Activated T-helper 1 cell treated with anti-CD3 and anti-CD28 coated beads, Interleukin-12 subunit alpha, Interleukin-12 subunit beta, Interleukin-2, Interleukin-4 antibody, amounts not matched to agents 30 ng/mL and 10 ng/mL and 1 ng/mL, durations not matched to agents 14 hours and 24 hours and 36 hours (primary cell): ENCODE measurements at regions of chr11 and their contacts with region 1.

Region 1: DNA sequence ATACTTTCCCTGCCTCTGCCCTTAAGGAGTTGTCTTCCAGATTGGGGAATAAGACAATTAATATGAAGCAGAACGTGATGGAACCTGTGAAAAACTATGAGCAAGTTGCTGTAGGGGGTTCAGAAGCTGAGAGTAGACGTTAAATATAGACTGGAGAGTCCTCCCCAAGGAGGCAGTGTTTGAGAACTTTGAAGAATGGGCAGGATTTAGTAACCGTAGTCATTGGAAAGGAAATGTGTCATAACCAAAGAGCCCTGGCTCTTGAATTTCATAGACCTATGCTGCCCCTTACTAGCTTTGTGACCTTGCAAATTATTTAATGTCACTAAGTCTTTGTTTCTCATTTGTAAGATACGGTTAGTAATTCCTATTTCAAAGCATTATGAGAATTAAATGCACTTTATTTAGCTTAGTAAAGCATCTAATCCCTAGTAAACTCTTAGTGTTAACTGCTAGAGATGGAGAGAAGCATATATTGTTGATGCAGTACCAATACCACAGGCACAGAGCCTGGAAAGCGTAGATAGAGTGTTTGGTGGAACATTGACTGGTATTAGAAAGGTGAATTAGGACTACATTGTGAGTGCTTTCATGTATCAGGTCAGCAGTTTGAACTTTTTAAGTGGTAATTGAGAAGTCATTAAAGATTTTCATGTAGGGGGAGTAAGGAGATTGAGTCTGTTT is 54.1 kb downstream of the MCAM start:
- DNase-seq: no peak
- H3K4me3 Mint-ChIP-seq: no peak overlapping the region
- H3K27ac Mint-ChIP-seq: no peak overlapping the region
- H3K4me1 Mint-ChIP-seq: peaks cover 46% of the 10 kb centered on the region
- H3K27me3 Mint-ChIP-seq: no peaks in the 10 kb centered on the region

Region 2: DNA sequence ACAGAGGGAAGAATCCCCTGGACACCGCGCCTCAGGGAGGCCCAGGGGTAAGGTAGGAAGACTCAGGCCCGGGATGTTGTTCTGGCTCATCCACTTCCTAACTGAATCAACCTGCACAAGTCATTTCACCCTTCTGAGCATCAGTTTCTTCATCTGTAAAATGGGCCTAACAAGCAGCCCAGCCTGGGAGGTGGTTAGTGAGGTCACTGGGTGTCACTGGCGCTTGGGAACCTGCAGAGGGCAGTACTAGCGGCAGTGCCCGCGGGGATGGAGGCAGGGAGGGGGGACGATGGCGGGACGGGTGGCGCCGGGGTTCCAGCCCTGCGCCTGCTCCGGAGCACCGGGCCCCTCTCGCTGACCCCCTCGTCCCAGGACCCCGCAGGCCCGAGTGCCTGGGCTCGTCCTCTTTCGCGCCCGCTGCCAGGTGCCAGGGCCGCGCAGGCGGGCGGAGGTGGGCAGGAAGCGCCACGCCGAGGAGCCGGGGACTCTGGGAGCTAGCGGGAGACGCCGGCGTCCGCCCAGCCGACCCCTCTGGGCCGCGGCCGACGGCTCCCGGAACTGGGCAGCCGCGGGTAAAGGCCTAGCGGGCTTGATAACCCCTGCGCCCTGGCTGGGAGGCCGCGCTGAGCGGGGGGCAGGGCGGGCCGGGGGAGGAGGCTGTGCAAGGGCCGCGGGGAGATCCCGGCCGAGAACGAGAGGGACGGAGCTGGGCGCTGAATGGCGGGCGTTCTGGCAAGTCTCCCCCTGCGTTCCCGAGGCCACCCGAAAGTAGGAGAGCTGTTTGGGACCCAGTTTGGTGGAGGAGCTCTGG is 94.1 kb before region 1 on chr11 and contains the start of gene NLRX1:
- intact Hi-C with region 1: loop called (anchors 2 kb)
- DNase-seq: peak; percentile 77
- H3K4me3 Mint-ChIP-seq: peak within 1 kb of the TSS; percentile 92
- H3K27ac Mint-ChIP-seq: peak within 1 kb of the TSS; percentile 94
- H3K4me1 Mint-ChIP-seq: peaks cover 24% of the 10 kb centered on the region
- H3K27me3 Mint-ChIP-seq: peaks cover 2% of the 10 kb centered on the region
- total RNA-seq, gene NLRX1: 24.1 and 29.5 TPM in 2 replicates

Region 3: DNA sequence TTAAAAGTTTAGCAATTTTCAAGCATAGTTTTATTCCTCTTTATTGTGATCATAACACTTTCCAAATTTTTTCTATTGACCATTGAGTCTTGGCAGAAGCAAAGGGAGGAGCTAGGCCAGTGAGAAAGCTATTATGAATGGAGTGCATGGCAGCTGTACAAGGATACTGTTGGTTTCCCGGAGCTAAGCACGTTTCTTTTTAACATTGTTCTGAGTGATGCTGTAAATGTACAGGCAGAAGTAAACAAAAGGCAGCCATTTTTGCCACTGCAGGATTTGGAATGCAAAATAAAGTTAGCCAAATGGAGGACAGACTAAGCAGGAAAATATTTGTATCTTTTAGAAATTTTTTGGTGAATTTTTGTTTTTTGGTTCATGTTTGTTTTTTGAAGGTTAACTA is 40.5 kb before region 1 on chr11:
- intact Hi-C with region 1: loop called (anchors 1 kb)
- DNase-seq: no peak
- H3K4me3 Mint-ChIP-seq: no peak overlapping the region
- H3K27ac Mint-ChIP-seq: no peak overlapping the region
- H3K4me1 Mint-ChIP-seq: peaks cover 36% of the 10 kb centered on the region
- H3K27me3 Mint-ChIP-seq: no peaks in the 10 kb centered on the region

Region 4: GRCh38 chr11:119236490-119236889 is 26.3 kb before region 1 on chr11:
- intact Hi-C with region 1: loop called (anchors 1 kb)
- DNase-seq: no peak
- H3K4me3 Mint-ChIP-seq: no peak overlapping the region
- H3K27ac Mint-ChIP-seq: peak overlapping the region; percentile 84
- H3K4me1 Mint-ChIP-seq: peaks cover 46% of the 10 kb centered on the region
- H3K27me3 Mint-ChIP-seq: no peaks in the 10 kb centered on the region

Region 5: DNA sequence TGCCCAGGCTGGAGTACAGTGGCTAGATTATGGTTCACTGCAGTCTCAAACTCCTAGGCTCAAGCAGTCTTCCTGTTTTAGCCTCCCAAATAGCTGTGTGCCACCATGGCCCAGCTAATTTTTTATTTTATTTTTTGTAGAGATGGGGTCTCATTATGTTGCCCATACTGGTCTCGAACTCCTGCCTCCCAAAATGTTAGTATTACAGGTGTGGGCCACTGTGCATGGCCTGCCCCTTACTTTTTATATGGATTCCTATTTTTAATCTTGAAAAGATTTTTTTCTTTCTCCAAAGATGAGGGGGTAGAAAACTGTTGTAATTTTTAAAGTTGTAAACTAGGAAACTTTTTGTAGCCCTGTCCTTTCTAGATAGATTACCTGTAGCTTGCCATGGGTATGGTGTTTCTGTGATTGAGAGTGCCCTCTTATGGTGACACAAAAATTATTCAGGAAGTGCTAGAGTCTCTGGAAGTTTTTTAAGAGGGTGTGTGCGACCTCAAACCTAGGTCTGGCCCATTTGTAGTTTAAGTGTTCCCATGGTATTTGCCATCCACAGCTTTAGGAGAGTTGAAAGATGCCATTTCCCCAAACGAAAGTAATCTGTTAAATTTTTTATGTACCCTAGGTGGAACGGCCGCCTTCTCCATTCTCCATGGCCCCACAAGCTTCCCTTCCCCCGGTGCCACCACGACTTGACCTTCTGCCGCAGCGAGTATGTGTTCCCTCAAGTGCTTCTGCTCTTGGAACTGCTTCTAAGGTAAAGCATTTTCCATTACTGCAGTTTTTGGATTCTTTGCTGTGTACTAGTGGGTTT is 21.7 kb after region 1 on chr11:
- intact Hi-C with region 1: loop called (anchors 1 kb)
- DNase-seq: no peak
- H3K4me3 Mint-ChIP-seq: no peak overlapping the region
- H3K27ac Mint-ChIP-seq: no peak overlapping the region
- H3K4me1 Mint-ChIP-seq: peaks cover 27% of the 10 kb centered on the region
- H3K27me3 Mint-ChIP-seq: no peaks in the 10 kb centered on the region

Region 6: GRCh38 chr11:119306373-119306890 is 43.6 kb after region 1 on chr11:
- intact Hi-C with region 1: loop called (anchors 2 kb)
- DNase-seq: peak; percentile 15
- H3K4me3 Mint-ChIP-seq: peak overlapping the region; percentile 48
- H3K27ac Mint-ChIP-seq: peak overlapping the region; percentile 95
- H3K4me1 Mint-ChIP-seq: peaks cover 30% of the 10 kb centered on the region
- H3K27me3 Mint-ChIP-seq: no peaks in the 10 kb centered on the region